Activated CD4-positive, alpha-beta T cell treated with anti-CD3 and anti-CD28 coated beads for 36 hours (primary cell): ENCODE measurements at regions of chr11 and their contacts with region 1.

Region 1: GRCh38 chr11:69642913-69643632 is 2.1 kb downstream of the CCND1 start:
- DNase-seq: peak; percentile 86
- ATAC-seq: peak; percentile 80
- H3K4me3 Mint-ChIP-seq: peak overlapping the region; percentile 51
- H3K27ac Mint-ChIP-seq: no peak overlapping the region
- H3K4me1 Mint-ChIP-seq: peaks cover 18% of the 10 kb centered on the region
- H3K27me3 Mint-ChIP-seq: peaks cover 23% of the 10 kb centered on the region

Region 2: DNA sequence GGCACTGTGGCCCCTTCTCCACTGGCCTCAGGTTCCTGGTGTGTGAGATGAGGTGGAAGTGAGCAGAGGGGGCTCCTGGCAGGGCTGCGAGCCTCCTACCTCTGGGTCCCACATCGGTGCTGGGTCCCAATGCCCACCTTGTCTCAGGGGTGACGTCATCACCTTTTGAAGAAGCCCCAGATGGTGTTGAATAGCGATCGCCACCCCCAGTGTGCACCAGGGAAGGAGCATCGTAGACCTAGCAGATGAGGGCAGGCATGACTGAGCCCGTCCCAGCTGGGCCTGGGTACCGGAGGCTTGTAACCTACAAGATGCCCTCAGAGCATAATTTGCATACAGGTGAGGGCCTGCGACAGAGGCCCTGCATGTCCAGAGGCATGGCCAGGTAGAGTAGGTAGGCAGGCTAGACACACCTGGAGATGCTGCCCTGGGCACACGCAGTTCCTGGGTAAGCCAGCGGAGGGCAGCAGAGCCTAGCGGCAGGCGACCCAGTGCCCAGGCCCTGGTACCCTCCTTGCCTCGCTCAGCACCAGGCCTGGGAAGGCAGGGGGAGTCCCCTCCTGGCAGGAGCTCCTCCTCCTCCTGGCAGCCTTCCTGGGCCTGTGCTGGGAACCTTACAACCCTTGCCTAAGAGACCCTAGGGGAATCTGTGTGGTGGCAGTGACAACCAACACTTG is 541.8 kb before region 1 on chr11:
- CTCF ChIA-PET with region 1: interaction called, 5 read pairs
- POLR2A ChIA-PET with region 1: no interaction called
- intact Hi-C with region 1: loop called (anchors 1 kb)
- DNase-seq: peak; percentile 85
- ATAC-seq: peak; percentile 93
- H3K4me3 Mint-ChIP-seq: no peak overlapping the region
- H3K27ac Mint-ChIP-seq: no peak overlapping the region
- H3K4me1 Mint-ChIP-seq: peaks cover 2% of the 10 kb centered on the region
- H3K27me3 Mint-ChIP-seq: no peaks in the 10 kb centered on the region

Region 3: DNA sequence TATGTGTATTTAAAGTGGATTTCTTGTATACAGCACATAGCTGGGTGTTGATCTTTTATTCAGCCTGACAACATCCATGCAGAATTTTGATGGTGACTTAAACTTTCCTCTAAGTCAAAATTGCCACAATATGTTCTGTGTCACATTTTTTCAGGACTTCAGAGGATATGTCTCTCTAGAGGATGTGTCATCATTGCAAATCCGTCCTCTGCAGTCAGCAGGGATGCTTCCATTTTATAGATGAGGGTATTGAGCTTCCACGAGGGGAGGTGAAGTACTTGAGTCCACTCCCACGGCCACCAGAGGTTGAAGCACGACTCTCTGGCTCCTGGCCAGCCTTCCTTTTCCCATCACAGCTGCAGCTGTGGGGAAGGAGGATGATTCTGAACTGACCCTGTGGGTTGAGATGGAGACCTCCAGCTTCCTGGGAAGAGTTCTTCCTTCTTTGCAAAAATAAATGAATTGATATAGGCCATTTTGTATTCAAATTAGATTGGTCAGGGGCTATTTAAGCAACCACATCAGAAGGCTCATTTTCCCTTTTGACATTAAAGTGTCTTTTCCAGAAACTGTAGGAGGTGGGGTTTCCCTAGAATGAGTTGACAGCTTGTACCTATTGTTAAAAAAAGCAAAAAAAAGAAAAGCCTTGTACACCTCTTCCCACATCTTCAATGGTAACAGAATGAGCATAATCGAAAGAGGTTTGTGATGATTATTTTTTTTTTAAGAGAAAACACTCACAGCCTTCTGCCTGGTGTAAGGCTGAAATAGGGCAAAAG is 404.3 kb before region 1 on chr11:
- CTCF ChIA-PET with region 1: no interaction called
- POLR2A ChIA-PET with region 1: no interaction called
- intact Hi-C with region 1: loop called in 1 of 2 experiments (anchors 5 kb)
- DNase-seq: peak; percentile 32
- ATAC-seq: peak; percentile 82
- H3K4me3 Mint-ChIP-seq: peak overlapping the region; percentile 12
- H3K27ac Mint-ChIP-seq: peak overlapping the region; percentile 68
- H3K4me1 Mint-ChIP-seq: peaks cover 40% of the 10 kb centered on the region
- H3K27me3 Mint-ChIP-seq: peaks cover 3% of the 10 kb centered on the region

Region 4: DNA sequence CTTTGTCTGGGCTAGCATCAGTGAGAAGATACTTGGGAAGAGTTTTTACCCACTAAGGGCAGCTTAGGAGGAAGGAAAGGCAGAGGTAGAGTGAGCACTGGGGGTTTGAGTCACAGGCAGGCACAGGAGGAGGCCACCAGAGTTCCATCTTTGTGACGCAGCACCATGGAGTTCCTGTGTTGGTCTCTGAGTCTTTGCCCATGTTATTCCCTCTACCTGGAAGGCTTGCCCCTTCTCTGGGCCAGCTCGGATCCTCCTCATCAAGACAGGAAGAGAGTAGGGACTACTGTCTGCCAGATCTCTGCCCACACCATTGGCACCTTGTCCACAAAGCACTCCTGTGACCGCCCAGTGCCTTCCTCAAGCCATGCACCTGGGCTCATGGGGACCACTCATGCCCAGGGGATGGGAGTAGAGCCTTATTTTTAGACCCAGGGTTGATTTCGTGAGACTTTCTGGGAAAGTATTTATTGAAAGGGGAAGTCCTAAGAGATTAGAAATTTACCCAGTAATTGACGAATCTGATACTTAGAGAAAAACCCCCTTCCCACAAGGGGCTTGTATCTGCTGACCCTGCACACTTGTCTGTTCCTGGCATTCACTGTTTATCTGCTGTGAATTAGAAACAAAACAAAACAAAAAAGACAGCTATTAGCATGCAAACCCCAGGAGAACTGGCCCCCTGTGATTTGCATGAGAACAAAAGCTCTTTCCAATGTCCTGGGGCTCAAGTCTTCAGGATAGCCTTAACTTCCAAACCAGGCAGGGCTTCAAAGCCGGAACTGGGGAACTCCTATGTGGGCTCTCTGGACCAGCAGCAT is 385.0 kb before region 1 on chr11:
- CTCF ChIA-PET with region 1: no interaction called
- POLR2A ChIA-PET with region 1: no interaction called
- intact Hi-C with region 1: no loop called
- DNase-seq: no peak
- ATAC-seq: no peak
- H3K4me3 Mint-ChIP-seq: no peak overlapping the region
- H3K27ac Mint-ChIP-seq: no peak overlapping the region
- H3K4me1 Mint-ChIP-seq: peaks cover 10% of the 10 kb centered on the region
- H3K27me3 Mint-ChIP-seq: no peaks in the 10 kb centered on the region

Region 5: DNA sequence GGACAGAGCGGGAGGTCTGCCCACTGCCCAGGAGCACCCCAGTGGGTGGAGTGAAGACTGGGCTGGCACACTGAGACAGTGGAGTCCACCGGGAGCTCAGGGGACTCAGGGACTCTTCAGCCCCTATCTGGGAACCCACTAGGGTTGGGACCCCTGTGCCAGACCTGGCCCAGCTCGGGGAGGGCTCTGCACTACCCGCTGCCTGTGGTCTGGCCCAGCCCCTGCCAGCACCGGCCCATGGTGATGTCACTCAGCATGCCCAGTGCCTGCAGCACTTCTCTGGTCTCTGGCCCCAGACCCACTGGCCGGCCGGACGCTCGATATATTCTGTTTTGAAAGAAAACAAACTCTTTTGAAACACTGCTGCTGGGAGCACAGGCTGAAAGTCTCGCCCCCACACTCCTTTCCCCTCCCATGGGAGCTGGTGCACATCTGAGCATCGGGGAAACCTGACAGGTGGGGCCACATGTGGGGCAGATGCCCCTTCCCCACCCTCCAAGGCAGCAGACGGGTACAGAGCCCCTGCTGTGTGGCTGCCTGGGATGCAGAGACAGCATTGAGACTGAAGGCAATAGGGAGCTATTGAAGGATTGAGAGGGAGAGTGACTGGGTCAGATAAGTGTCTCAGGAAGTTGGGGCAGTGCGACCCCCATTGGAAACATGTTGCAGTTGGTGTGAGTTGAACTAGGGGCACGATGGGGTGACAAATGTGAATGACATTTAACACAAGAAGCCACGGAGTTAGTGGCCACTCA is 286.2 kb before region 1 on chr11:
- CTCF ChIA-PET with region 1: no interaction called
- POLR2A ChIA-PET with region 1: no interaction called
- intact Hi-C with region 1: no loop called
- DNase-seq: no peak
- ATAC-seq: no peak
- H3K4me3 Mint-ChIP-seq: no peak overlapping the region
- H3K27ac Mint-ChIP-seq: no peak overlapping the region
- H3K4me1 Mint-ChIP-seq: peaks cover 9% of the 10 kb centered on the region
- H3K27me3 Mint-ChIP-seq: no peaks in the 10 kb centered on the region

Region 6: DNA sequence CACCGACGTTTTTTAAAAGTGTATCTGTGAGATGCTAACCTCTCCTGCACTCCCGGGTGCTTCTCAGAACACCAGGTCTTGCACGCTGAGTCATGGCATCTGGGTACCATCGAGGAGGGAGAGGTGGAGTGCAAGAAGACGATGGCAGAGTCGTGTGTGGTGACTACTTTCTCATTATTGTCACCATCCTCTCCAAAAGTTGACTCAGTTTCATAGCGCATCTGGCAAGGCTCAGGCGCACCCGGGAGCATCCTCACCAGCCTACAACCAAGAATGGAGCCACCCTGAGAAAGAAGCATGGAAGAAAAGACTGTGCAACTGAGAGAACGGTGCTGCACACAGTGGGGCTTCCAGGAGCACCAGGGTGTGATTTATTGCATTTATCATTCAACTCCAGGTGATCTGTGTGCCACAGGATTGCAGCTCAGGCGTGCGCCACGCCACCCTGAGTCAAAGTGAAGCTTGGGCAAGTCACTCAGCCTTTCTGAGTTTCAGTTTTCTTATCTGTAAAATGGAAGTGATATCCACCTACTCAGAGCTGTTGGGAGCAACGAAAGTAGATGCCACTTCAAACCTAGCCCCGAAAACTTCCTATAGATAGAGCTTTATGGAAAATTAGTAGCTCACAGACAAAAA is 96.2 kb before region 1 on chr11:
- CTCF ChIA-PET with region 1: interaction called, 3 read pairs
- POLR2A ChIA-PET with region 1: no interaction called
- intact Hi-C with region 1: loop called in 1 of 2 experiments (anchors 2 kb)
- DNase-seq: peak; percentile 84
- ATAC-seq: peak; percentile 90
- H3K4me3 Mint-ChIP-seq: no peak overlapping the region
- H3K27ac Mint-ChIP-seq: peak overlapping the region; percentile 40
- H3K4me1 Mint-ChIP-seq: peaks cover 27% of the 10 kb centered on the region
- H3K27me3 Mint-ChIP-seq: peaks cover 45% of the 10 kb centered on the region

Region 7: DNA sequence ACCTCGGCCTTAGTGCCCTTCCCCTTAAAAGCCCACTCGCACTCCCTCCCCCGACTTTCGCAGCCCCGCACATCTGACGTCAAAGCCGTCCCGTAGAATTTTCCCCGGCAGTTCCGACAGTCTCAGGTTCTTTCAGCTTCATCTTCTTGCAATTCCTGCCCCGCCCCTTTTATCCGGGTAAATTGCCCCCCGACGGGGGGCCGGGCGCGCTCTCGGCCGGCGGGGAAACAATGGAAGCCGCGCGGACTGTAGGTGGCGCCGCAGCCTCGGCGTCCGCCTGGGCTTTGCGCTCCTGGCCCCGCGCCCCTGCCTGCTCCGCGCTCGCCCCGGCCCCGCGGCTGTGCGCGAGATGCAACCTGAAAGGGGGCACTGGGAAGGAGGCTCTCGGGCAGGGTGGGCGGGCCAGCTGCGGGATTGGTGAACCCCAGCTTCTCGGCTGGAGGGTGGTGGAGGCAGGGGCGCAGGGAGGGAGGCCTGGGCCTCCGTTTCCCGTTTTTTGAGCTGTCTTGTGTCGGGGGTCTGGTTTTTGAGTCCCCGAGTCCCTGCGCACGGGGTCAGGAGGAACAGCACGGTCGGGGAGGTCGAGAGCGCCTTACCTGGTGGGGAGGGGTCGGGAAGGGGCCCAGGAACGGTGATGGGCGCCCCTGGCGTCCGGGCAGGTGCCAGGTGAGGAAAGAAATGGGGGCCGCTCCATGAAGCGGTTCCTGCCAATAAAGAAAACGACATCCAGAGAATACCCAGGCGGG is 61.6 kb after region 1 on chr11:
- CTCF ChIA-PET with region 1: no interaction called
- POLR2A ChIA-PET with region 1: no interaction called
- intact Hi-C with region 1: loop called in 1 of 2 experiments (anchors 5 kb)
- DNase-seq: peak; percentile 51
- ATAC-seq: peak; percentile 63
- H3K4me3 Mint-ChIP-seq: no peak overlapping the region
- H3K27ac Mint-ChIP-seq: no peak overlapping the region
- H3K4me1 Mint-ChIP-seq: peaks cover 4% of the 10 kb centered on the region
- H3K27me3 Mint-ChIP-seq: peaks cover 32% of the 10 kb centered on the region